BJ (cell line): ENCODE measurements at regions of chr2 and their contacts with region 1.

Region 1: DNA sequence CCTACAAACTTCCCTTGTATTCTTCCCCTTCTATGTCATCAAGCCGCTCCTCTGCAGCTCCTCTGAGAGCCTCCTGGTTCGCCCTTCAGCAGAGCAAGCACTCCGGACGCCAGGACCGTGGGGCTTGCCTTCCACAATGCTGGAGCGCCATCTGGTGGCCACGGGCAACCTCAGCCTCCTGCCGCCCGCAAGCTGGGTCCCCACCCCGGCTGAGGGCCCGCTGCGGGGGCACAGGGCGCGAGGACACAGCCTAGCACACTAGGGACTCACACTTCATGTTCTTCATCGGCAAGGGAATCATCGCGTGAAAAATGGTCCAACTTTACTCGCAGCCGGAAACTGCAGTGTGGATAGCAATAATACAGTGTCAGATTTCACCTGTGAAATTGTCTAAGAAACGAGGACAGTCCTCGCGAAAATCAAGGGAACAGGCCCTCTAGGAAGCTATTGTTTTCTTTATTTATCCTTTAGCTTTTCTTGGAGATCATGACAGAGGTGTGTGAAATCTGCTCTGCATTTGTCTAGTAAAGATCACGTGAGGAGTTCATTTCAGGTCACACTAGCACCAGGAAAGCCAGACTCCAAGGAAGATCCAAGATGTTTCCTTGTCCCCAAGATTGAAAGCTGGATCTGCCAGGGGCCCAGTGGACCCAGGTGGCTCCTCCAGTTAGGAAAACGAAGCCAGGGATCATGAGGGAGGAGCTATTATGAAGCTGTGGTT is 5.8 kb downstream of the PRLH start:
- DNase-seq: peak; percentile 34
- H3K4me3 ChIP-seq: no peak overlapping the region
- H3K27me3 ChIP-seq: no peaks in the 10 kb centered on the region
- CTCF ChIP-seq: peak; percentile 99

Region 2: DNA sequence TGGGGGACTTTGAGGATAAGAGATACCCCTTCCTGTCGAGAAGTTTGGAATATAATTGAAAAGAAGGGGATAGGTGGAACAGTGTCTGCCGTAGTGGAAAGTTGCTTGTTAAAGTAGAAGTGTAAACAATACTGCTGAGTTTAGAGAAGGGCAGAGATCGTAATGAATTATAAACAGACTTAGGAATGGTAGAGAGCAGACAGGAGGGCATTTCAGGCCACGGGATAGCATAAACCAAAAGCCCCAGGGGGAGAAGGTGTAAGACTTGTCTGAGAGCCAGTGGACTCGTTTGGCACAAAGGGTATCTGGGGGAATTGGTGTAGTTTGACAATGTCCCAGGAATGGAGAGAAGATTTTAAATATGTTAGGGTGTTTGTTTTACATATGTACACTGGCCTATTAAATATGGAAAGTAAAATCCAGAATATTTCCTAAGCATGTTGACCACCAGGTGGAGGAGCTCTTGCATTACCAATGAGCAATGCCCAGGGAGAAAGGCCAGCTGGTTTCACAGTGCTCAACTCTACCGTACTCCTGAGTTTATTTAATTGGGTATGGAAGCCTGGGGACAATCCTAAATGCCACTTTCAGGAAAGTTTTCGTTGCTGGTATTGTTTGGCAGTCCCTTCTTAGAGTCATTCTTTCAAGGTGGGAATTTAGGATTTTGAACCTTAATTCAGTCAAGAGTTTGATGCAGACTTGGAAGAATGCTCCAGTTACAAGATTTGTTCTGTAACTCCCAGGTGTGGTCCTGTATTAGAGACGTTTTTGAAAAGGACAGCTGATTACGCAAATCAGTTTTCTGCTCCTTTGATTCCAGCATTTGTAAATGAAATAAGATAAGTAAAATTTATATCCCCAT is 479.0 kb before region 1 on chr2:
- CTCF ChIA-PET with region 1: interaction called, 23 read pairs
- POLR2A ChIA-PET with region 1: interaction called, 14 read pairs
- DNase-seq: no peak
- H3K4me3 ChIP-seq: no peak overlapping the region
- H3K27me3 ChIP-seq: no peaks in the 10 kb centered on the region
- CTCF ChIP-seq: peak; percentile 69

Region 3: DNA sequence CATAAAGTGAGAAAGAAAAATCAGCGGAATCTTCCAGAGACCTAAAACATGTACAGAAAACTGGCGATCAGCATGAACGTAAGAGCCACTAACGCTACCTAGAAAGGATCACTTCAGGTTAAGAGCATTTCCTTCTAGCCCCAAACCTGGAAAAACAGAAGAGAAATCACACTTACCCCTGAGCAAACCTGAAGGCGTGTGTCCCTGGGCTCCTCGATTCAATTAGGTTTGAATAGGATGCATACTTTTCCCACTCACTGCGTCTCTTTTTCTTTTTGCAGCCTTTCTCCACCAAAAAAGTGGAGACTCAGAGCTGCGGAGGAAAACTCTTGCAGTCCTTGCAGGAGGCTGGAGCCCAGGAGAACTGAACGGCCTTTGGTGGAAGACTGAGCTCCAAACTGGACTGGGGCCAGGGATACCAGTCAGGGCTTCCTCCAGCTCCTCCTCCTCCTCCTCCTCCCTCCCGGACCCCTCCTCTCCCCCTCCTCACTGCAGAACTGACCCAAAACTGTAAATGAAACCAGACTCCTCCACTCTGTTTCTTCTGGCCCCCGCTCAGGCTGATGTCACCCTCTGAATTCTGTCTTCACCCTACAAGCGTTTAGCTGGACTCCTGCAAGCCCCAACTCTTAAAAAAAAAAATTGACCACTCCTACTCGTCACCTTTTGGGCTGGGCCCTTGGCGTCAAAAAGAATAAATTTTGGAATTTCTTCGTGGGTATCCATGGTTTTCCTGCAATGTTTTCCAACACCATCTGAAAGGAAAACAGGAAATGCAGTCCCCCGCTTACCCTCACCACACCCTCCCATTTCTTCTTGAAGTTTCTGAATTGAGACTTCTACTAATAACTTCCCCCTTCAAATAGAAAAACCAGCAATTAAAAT is 158.2 kb before region 1 on chr2 and contains the start of gene COL6A3:
- CTCF ChIA-PET with region 1: interaction called, 15 read pairs
- POLR2A ChIA-PET with region 1: no interaction called
- DNase-seq: peak; percentile 97
- H3K4me3 ChIP-seq: peak within 1 kb of the TSS; percentile 94
- H3K27me3 ChIP-seq: no peaks in the 10 kb centered on the region
- CTCF ChIP-seq: no peak
- polyA plus RNA-seq, gene COL6A3: 522 and 695 TPM in 2 replicates

Region 4: GRCh38 chr2:237465515-237466218 is 106.5 kb before region 1 on chr2:
- CTCF ChIA-PET with region 1: interaction called, 40 read pairs
- POLR2A ChIA-PET with region 1: no interaction called
- DNase-seq: peak; percentile 86
- H3K4me3 ChIP-seq: no peak overlapping the region
- H3K27me3 ChIP-seq: no peaks in the 10 kb centered on the region
- CTCF ChIP-seq: no peak

Region 5: GRCh38 chr2:237500681-237501424 is 71.3 kb before region 1 on chr2:
- CTCF ChIA-PET with region 1: interaction called, 14 read pairs
- POLR2A ChIA-PET with region 1: no interaction called
- DNase-seq: peak; percentile 100
- H3K4me3 ChIP-seq: no peak overlapping the region
- H3K27me3 ChIP-seq: no peaks in the 10 kb centered on the region
- CTCF ChIP-seq: no peak

Region 6: GRCh38 chr2:237540823-237541222 is 31.4 kb before region 1 on chr2:
- CTCF ChIA-PET with region 1: interaction called, 18 read pairs
- POLR2A ChIA-PET with region 1: no interaction called
- DNase-seq: peak; percentile 25
- H3K4me3 ChIP-seq: no peak overlapping the region
- H3K27me3 ChIP-seq: no peaks in the 10 kb centered on the region
- CTCF ChIP-seq: no peak

Region 7: DNA sequence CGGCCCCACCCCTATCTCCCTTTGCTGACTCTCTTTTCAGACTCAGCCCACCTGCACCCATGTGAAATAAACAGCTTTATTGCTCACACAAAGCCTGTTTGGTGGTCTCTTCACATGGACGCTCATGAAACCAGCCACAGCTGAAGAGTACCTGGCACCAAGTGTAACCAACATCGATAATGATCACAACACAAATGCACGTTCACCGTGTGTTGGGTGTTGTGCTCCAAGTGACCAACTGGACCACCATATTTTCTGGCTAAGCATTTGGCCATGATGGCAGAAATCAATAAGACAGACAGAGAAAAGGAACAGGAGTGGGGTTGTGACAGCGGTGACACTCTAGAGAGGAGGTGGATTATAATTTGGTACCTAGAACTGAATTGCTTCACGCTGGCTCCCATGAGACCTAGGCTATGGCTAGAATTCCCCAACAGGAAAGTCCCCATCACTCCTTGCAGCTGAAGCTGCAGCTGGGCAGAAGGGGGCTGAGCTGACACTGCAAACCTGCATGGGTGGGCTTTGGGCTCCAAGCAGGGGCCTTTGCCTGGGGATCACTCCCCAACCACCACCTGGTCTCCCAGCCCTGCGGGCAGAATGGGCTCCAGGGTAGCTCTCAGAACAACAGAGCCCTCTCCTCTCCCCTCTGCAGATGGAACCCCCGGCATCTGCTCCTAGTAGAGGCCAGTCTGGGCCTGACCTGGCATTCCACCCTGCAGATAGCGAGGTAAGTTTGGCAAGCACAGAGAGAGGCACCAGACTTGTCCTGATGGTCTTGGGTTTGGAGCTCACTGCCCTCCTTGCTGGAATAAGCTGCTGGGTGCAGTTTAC is 40.6 kb after region 1 on chr2:
- CTCF ChIA-PET with region 1: no interaction called
- POLR2A ChIA-PET with region 1: no interaction called
- DNase-seq: no peak
- H3K4me3 ChIP-seq: no peak overlapping the region
- H3K27me3 ChIP-seq: no peaks in the 10 kb centered on the region
- CTCF ChIP-seq: no peak